H1 (cell line): ENCODE measurements at regions of chr7 and their contacts with region 1.

Region 1: GRCh38 chr7:127304087-127304486 is 51.3 kb upstream of the GRM8 start:
- DNase-seq: no peak
- H3K4me3 ChIP-seq: no peak overlapping the region
- H3K27ac ChIP-seq: no peak overlapping the region
- H3K4me1 ChIP-seq: no peaks in the 10 kb centered on the region
- H3K27me3 ChIP-seq: no peaks in the 10 kb centered on the region
- CTCF ChIP-seq: no peak
- EP300 ChIP-seq: no peak
- POLR2A ChIP-seq: no peak
- RAD21 ChIP-seq: no peak

Region 2: GRCh38 chr7:127239814-127240213 is 64.3 kb before region 1 on chr7:
- CTCF ChIA-PET with region 1: no interaction called
- POLR2A ChIA-PET with region 1: no interaction called
- DNase-seq: peak in 1 of 2 experiments; percentile 53
- H3K4me3 ChIP-seq: no peak overlapping the region
- H3K27ac ChIP-seq: no peak overlapping the region
- H3K4me1 ChIP-seq: no peaks in the 10 kb centered on the region
- H3K27me3 ChIP-seq: no peaks in the 10 kb centered on the region
- CTCF ChIP-seq: peak; percentile 33 to 74 (median 72); a peak in 2 of 4 replicates
- EP300 ChIP-seq: no peak
- POLR2A ChIP-seq: no peak
- RAD21 ChIP-seq: peak; percentile 42 to 49; a peak in 3 of 4 replicates

Region 3: GRCh38 chr7:127290801-127291361 is 13.2 kb before region 1 on chr7:
- CTCF ChIA-PET with region 1: interaction called, 15 read pairs
- POLR2A ChIA-PET with region 1: no interaction called
- DNase-seq: no peak
- H3K4me3 ChIP-seq: no peak overlapping the region
- H3K27ac ChIP-seq: no peak overlapping the region
- H3K4me1 ChIP-seq: no peaks in the 10 kb centered on the region; a peak in 1 of 7 replicates
- H3K27me3 ChIP-seq: no peaks in the 10 kb centered on the region
- CTCF ChIP-seq: no peak
- EP300 ChIP-seq: no peak
- POLR2A ChIP-seq: no peak
- RAD21 ChIP-seq: no peak

Region 4: DNA sequence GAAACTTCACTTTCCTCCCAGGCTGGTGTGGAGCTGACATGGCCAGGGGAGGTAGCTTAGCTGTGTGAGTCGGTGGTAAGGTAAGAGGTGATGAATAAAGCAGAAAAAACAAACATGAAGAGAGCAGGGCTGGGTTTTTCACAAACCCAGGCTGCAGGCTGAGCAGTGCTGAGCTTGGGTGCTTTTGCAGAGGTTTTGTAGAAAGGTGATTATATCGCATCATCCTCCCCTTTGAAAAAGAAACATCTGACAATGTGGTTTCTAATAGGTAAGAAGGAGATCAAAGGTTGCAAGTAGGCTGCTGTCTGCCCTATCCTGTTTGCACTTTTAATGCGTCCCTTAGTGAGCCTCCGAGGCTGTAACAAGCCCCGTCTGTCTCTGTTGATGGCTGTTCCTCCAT is 18.3 kb after region 1 on chr7:
- CTCF ChIA-PET with region 1: interaction called, 25 read pairs
- POLR2A ChIA-PET with region 1: no interaction called
- DNase-seq: no peak
- H3K4me3 ChIP-seq: no peak overlapping the region
- H3K27ac ChIP-seq: no peak overlapping the region
- H3K4me1 ChIP-seq: peaks cover 0 to 3% (median 0%) of the 10 kb centered on the region in 4 experiments; a peak in 1 of 7 replicates
- H3K27me3 ChIP-seq: no peaks in the 10 kb centered on the region
- CTCF ChIP-seq: no peak
- EP300 ChIP-seq: no peak
- POLR2A ChIP-seq: no peak
- RAD21 ChIP-seq: no peak